ENCODE measurements at regions of chr4 and their contacts with region 1.

Region 1: DNA sequence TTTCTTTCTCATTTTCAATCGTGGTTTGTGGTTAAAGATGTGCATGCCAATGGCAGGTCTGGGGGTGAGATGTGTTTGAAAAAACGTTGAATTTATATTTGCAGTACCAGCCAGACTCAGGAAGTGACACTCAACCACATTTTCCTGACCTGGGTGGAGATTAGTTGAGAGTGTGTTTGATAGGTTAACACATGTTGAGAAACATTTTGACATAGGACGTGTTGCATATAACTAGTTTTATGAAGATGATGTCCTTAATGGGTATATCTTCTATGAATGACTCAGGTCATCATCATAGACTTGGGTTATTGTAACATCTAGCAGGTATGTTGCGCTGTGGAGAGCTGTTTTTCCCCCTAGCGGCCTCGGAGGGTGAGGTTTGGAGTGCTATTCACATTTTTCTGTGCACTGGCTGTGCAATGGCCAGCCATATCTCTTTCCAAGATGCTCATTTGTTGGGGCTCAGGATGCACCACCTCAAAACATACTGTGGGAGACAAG is 21.7 kb upstream of the CD38 start:
- DNase-seq: peak; percentile 76
- H3K4me3 Mint-ChIP-seq: peak overlapping the region; percentile 80
- H3K27ac Mint-ChIP-seq: peak overlapping the region; percentile 96
- H3K4me1 Mint-ChIP-seq: peaks cover 54% of the 10 kb centered on the region
- H3K27me3 Mint-ChIP-seq: no peaks in the 10 kb centered on the region

Region 2: DNA sequence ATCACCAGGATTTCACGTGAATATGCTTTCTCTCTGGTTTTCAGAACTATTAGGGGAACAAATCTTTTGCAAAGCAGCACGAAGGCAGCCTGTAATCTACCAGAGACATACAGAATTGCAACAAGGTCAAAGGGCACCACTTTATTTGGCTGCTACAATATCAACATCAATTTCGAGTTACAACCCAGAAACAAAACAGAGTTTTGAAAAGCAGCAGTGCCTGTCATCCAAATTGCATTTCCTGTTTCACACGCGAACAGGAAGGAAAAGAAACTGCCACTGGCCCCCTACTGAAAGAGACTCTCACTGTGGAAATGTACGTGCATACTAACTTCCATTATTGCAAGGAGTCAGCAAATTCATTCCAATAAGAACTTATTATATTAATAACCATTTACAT is 345.7 kb before region 1 on chr4:
- intact Hi-C with region 1: no loop called
- DNase-seq: no peak
- H3K4me3 Mint-ChIP-seq: no peak overlapping the region
- H3K27ac Mint-ChIP-seq: no peak overlapping the region
- H3K4me1 Mint-ChIP-seq: peaks cover 29% of the 10 kb centered on the region
- H3K27me3 Mint-ChIP-seq: peaks cover 3% of the 10 kb centered on the region

Region 3: GRCh38 chr4:15655229-15656037 is 101.0 kb before region 1 on chr4 and contains the start of gene FBXL5:
- intact Hi-C with region 1: loop called (anchors 2 kb)
- DNase-seq: peak; percentile 81
- H3K4me3 Mint-ChIP-seq: peak within 1 kb of the TSS; percentile 93
- H3K27ac Mint-ChIP-seq: peak within 1 kb of the TSS; percentile 96
- H3K4me1 Mint-ChIP-seq: peaks cover 51% of the 10 kb centered on the region
- H3K27me3 Mint-ChIP-seq: no peaks in the 10 kb centered on the region
- total RNA-seq, gene FBXL5: 28.9 and 30.3 TPM in 2 replicates

Region 4: GRCh38 chr4:15729910-15730533 is 26.4 kb before region 1 on chr4:
- intact Hi-C with region 1: loop called (anchors 1 kb)
- DNase-seq: no peak
- H3K4me3 Mint-ChIP-seq: no peak overlapping the region
- H3K27ac Mint-ChIP-seq: no peak overlapping the region
- H3K4me1 Mint-ChIP-seq: peaks cover 21% of the 10 kb centered on the region
- H3K27me3 Mint-ChIP-seq: peaks cover 8% of the 10 kb centered on the region

Region 5: DNA sequence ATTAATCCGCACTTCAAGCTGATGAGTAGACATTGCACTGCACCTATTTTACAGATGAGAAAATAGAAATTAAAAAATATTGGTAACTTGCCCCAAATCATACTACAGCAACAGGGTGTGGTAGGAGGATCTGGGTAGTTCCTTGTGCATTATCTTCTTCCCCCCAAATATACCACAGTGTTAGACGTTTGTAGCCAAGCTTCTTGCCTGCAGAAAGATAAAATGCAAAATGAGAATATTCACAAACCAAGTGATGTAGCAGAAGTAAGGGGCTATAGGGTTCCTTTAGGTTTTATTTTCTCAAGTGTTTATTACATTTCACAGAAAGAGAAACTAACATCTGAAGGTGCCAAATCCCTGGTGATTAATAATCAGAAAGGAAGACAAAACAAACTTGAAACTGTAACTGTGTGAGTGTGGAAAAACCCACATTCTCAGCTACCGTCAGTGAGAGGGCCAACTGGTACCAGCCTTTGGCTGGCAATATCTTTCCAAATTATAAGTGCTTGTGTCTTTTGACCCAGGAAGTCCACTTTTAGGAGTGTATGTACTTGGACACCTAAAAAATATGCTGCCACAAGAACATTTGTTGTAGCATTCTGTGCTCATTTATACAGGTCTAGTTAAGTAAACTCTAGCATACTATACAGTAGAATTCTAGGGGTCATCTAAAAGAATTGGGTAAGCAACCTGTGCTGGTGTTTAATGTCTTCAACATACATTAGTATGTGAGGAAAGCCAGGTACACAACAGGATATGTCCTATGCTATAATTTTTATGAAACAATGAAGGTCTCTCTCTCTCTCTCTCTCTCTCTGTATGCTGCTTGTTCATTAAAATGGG is 15.0 kb after region 1 on chr4:
- intact Hi-C with region 1: loop called (anchors 1 kb)
- DNase-seq: peak; percentile 30
- H3K4me3 Mint-ChIP-seq: peak overlapping the region; percentile 63
- H3K27ac Mint-ChIP-seq: peak overlapping the region; percentile 81
- H3K4me1 Mint-ChIP-seq: peaks cover 73% of the 10 kb centered on the region
- H3K27me3 Mint-ChIP-seq: no peaks in the 10 kb centered on the region

Region 6: GRCh38 chr4:15794905-15795304 is 38.5 kb after region 1 on chr4:
- intact Hi-C with region 1: loop called (anchors 2 kb)
- DNase-seq: no peak
- H3K4me3 Mint-ChIP-seq: peak overlapping the region; percentile 39
- H3K27ac Mint-ChIP-seq: peak overlapping the region; percentile 89
- H3K4me1 Mint-ChIP-seq: peaks cover 61% of the 10 kb centered on the region
- H3K27me3 Mint-ChIP-seq: no peaks in the 10 kb centered on the region